ENCODE measurements at regions of chr6 and their contacts with region 1.

Region 1: GRCh38 chr6:127737009-127737486 is 160.1 kb downstream of the C6orf58 start:
- DNase-seq: peak; percentile 19
- ATAC-seq: peak; percentile 76 to 78

Region 2: GRCh38 chr6:127630800-127631199 is 106.2 kb before region 1 on chr6:
- intact Hi-C with region 1: no loop called
- DNase-seq: no peak
- ATAC-seq: no peak

Region 3: GRCh38 chr6:128731249-128732165 is 994.5 kb after region 1 on chr6:
- intact Hi-C with region 1: loop called (anchors 5 kb)
- DNase-seq: no peak
- ATAC-seq: peak; percentile 69 to 85

Measured in left cardiac atrium (tissue), 4 donors.